CD4-positive, alpha-beta memory T cell (primary cell): ENCODE measurements at regions of chr7 and their contacts with region 1.

Region 1: GRCh38 chr7:1181640-1182039 is 21.6 kb upstream of the ZFAND2A start:
- DNase-seq: no peak
- H3K4me3 ChIP-seq: no peak overlapping the region
- H3K4me3 Mint-ChIP-seq: no peak overlapping the region
- H3K27ac ChIP-seq: no peak overlapping the region
- H3K27ac Mint-ChIP-seq: no peak overlapping the region
- H3K4me1 ChIP-seq: peaks cover 3% of the 10 kb centered on the region
- H3K4me1 Mint-ChIP-seq: peaks cover under 1 to 6% (median 4%) of the 10 kb centered on the region in 4 donors
- H3K27me3 ChIP-seq: no peaks in the 10 kb centered on the region
- H3K27me3 Mint-ChIP-seq: peaks cover 16% of the 10 kb centered on the region in 2 donors

Region 2: GRCh38 chr7:1169409-1170368 is 12.0 kb before region 1 on chr7:
- CTCF ChIA-PET with region 1: interaction called, 14 read pairs
- POLR2A ChIA-PET with region 1: no interaction called
- intact Hi-C with region 1: no loop called
- DNase-seq: peak; percentile 89 to 94 (median 92)
- H3K4me3 ChIP-seq: peak overlapping the region; percentile 35 to 52
- H3K4me3 Mint-ChIP-seq: peak overlapping the region; percentile 84 to 95 (median 92)
- H3K27ac ChIP-seq: peak overlapping the region; percentile 29
- H3K27ac Mint-ChIP-seq: peak overlapping the region; percentile 85 to 98 (median 93)
- H3K4me1 ChIP-seq: peaks cover 10% of the 10 kb centered on the region
- H3K4me1 Mint-ChIP-seq: peaks cover 11 to 21% (median 12%) of the 10 kb centered on the region in 4 donors
- H3K27me3 ChIP-seq: no peaks in the 10 kb centered on the region
- H3K27me3 Mint-ChIP-seq: no peaks in the 10 kb centered on the region

Region 3: DNA sequence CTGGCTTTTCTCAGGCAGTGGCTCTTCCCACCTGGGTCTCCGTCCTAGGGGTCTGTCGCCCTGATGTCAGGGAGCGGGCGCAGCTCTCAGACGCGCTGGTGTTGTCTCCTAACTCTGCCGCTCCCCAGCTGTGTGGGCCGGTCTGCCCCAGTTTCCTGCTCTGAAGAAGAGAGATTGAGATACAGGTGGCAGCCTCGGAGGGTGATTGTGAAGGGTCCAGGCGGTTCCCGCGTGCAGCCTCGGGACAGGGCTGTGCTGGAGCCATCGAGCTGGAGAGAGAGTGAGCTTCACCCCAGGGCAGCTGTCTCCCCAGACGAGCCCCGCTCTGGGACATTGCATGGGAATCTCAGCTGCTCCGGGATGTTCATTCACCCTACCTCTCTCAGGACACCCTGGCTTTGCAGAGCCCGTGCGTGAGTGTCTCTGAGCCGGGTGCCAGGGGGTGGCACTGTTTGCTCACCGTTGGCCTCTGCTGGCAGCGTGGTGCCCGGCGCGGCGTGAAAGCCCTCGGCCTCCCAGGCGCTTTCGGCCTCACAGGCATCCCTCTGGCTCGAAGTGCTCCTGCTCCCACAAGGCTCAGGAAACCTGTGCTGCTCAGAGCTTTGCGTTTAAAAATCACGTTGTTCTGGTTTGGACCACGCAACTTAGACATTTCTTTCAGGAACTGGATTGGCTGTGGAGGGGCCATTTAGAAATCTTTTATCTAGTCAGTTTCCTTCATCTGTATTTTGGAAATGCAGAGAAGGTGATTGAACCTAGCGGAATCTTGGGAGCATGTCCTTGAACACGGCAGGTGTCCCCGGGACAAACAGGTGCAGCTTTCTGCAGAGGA is 12.2 kb after region 1 on chr7:
- CTCF ChIA-PET with region 1: interaction called, 24 read pairs
- POLR2A ChIA-PET with region 1: no interaction called
- intact Hi-C with region 1: no loop called
- DNase-seq: no peak
- H3K4me3 ChIP-seq: no peak overlapping the region
- H3K4me3 Mint-ChIP-seq: no peak overlapping the region
- H3K27ac ChIP-seq: no peak overlapping the region
- H3K27ac Mint-ChIP-seq: no peak overlapping the region
- H3K4me1 ChIP-seq: peaks cover 8% of the 10 kb centered on the region
- H3K4me1 Mint-ChIP-seq: peaks cover 0 to 12% (median 8%) of the 10 kb centered on the region in 4 donors
- H3K27me3 ChIP-seq: no peaks in the 10 kb centered on the region
- H3K27me3 Mint-ChIP-seq: peaks cover 6 to 14% of the 10 kb centered on the region in 2 donors